GM18951 (cell line): ENCODE measurements at regions of chr4 and their contacts with region 1.

Region 1: GRCh38 chr4:155809835-155810234 is 51.0 kb downstream of the GUCY1B1 start:
- POLR2A ChIP-seq: no peak

Region 2: GRCh38 chr4:155140889-155141288 is 668.9 kb before region 1 on chr4:
- in situ Hi-C with region 1: no loop called
- POLR2A ChIP-seq: no peak

Region 3: GRCh38 chr4:155473420-155474095 is 336.3 kb before region 1 on chr4:
- in situ Hi-C with region 1: no loop called
- POLR2A ChIP-seq: no peak

Region 4: GRCh38 chr4:155953151-155954114 is 143.6 kb after region 1 on chr4 and contains the start of gene CTSO:
- in situ Hi-C with region 1: loop called (anchors 5 kb)
- POLR2A ChIP-seq: peak; percentile 92

Region 5: DNA sequence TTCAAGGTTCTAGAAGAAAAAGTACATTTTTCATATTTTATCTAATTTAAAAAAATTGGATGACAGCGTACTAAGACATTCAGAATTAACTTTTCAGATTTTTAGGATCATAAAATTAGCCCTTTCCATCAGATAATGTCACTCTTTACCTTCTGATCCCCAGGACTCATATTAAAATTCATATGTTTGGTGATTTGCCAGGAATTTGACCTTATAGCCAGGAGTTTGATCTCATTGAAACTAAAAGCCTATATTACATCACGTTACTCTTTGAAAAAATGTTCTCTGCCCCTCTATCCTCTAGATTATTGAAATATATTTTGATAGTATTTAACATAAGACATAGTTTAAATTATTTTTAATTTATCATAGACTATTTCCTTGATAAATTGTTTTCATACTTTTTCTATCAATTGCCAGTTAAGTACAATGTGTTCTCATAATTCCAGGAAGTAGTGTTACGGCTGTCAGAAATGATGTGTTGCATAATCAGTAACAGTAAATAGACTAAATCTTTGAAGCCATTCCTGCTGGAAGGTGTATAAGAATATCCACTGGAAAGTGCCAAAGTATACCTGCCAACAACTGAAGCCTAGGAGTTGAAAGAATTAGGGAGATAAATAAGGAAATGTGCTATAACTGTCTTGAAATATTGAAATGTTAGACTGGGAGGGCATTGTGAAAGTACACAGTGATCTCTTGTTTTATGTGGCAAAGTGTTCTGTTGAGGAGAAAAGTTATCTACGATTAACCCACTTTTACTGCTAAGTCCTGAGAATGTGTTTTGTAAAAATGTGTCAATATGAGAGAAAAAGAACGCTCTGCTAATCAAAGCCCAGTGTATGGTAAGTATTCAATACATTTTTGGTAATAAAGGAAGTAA is 1194.7 kb after region 1 on chr4:
- in situ Hi-C with region 1: no loop called
- POLR2A ChIP-seq: no peak